ENCODE measurements at regions of chr10 and their contacts with region 1.

Region 1: DNA sequence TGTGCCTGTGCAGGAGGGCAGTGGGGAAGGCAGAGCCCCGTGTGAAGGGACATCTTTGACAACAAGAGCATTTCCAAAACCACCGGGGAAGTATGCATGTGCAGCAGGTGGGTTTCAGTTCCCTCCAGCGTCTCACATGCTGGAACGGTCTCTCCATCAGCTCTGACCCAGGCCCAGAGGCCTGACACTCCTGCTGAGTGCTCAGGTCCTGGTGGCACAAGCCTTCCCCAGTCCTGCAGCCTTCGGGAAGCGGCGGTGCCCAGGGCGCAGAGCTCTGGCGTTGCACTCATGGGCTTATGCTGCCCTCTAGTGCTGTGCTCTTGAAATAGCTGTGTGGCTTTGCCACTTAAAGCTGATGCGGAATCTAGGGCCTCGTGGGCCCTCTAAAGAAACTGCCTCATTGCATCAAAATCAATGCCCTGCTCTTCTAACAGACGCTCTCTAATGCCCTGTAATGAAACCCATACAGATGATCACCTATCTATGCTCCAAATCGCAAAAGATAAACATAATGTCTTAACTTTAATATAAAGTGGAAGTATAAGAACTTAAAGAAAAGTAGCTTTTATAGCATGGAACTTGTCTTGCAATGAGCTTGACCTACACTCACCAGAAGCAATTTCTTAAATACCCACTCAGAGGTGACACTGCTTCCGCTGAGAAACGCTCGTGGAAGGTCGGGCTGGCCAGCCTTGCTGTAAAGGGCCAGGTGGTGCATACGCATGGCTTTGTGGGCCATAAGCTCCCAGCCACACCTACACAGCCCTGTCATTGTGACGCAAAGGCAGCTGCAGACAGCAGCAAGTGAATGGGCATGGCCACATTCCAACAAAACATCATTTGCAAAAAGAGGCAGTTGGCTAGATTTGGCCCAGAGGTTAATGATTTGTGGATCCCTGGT is 38.6 kb downstream of the CLRN3 start:
- DNase-seq: peak; percentile 51 to 85
- H3K4me3 ChIP-seq: no peak overlapping the region
- H3K27ac ChIP-seq: no peak overlapping the region
- H3K4me1 ChIP-seq: peaks cover 0 to 5% (median 2%) of the 10 kb centered on the region in 4 experiments; a peak in 4 of 7 replicates
- H3K27me3 ChIP-seq: no peaks in the 10 kb centered on the region
- CTCF ChIP-seq: peak; percentile 77 to 93 (median 88)
- EP300 ChIP-seq: no peak
- POLR2A ChIP-seq: no peak
- RAD21 ChIP-seq: peak; percentile 99

Region 2: GRCh38 chr10:127649642-127650041 is 204.5 kb before region 1 on chr10:
- CTCF ChIA-PET with region 1: interaction called, 22 read pairs
- POLR2A ChIA-PET with region 1: no interaction called
- DNase-seq: peak; percentile 21 to 74
- H3K4me3 ChIP-seq: no peak overlapping the region
- H3K27ac ChIP-seq: no peak overlapping the region
- H3K4me1 ChIP-seq: no peaks in the 10 kb centered on the region
- H3K27me3 ChIP-seq: no peaks in the 10 kb centered on the region
- CTCF ChIP-seq: peak; percentile 47 to 74 (median 72)
- EP300 ChIP-seq: no peak
- POLR2A ChIP-seq: no peak
- RAD21 ChIP-seq: peak; percentile 68 to 79

Region 3: GRCh38 chr10:127694580-127695193 is 159.4 kb before region 1 on chr10:
- CTCF ChIA-PET with region 1: interaction called, 22 read pairs
- POLR2A ChIA-PET with region 1: no interaction called
- DNase-seq: peak; percentile 60 to 94
- H3K4me3 ChIP-seq: no peak overlapping the region
- H3K27ac ChIP-seq: no peak overlapping the region
- H3K4me1 ChIP-seq: peaks cover 0 to 2% (median 0%) of the 10 kb centered on the region in 4 experiments; a peak in 2 of 7 replicates
- H3K27me3 ChIP-seq: no peaks in the 10 kb centered on the region
- CTCF ChIP-seq: peak; percentile 84 to 98 (median 91)
- EP300 ChIP-seq: peak in 1 of 2 experiments; percentile 43; a peak in 1 of 3 replicates
- POLR2A ChIP-seq: no peak
- RAD21 ChIP-seq: peak; percentile 56 to 67

Region 4: GRCh38 chr10:127755753-127756152 is 98.4 kb before region 1 on chr10:
- CTCF ChIA-PET with region 1: interaction called, 26 read pairs
- POLR2A ChIA-PET with region 1: no interaction called
- DNase-seq: no peak
- H3K4me3 ChIP-seq: no peak overlapping the region
- H3K27ac ChIP-seq: no peak overlapping the region
- H3K4me1 ChIP-seq: no peaks in the 10 kb centered on the region
- H3K27me3 ChIP-seq: no peaks in the 10 kb centered on the region
- CTCF ChIP-seq: no peak
- EP300 ChIP-seq: no peak
- POLR2A ChIP-seq: no peak
- RAD21 ChIP-seq: peak in 1 of 2 experiments; percentile 9; a peak in 1 of 4 replicates

Region 5: GRCh38 chr10:127836966-127837365 is 17.2 kb before region 1 on chr10:
- CTCF ChIA-PET with region 1: interaction called, 20 read pairs
- POLR2A ChIA-PET with region 1: interaction called, 3 read pairs
- DNase-seq: no peak
- H3K4me3 ChIP-seq: no peak overlapping the region
- H3K27ac ChIP-seq: no peak overlapping the region
- H3K4me1 ChIP-seq: peaks cover 0 to 4% (median 1%) of the 10 kb centered on the region in 4 experiments; a peak in 1 of 7 replicates
- H3K27me3 ChIP-seq: no peaks in the 10 kb centered on the region
- CTCF ChIP-seq: no peak
- EP300 ChIP-seq: no peak
- POLR2A ChIP-seq: no peak
- RAD21 ChIP-seq: no peak

Region 6: DNA sequence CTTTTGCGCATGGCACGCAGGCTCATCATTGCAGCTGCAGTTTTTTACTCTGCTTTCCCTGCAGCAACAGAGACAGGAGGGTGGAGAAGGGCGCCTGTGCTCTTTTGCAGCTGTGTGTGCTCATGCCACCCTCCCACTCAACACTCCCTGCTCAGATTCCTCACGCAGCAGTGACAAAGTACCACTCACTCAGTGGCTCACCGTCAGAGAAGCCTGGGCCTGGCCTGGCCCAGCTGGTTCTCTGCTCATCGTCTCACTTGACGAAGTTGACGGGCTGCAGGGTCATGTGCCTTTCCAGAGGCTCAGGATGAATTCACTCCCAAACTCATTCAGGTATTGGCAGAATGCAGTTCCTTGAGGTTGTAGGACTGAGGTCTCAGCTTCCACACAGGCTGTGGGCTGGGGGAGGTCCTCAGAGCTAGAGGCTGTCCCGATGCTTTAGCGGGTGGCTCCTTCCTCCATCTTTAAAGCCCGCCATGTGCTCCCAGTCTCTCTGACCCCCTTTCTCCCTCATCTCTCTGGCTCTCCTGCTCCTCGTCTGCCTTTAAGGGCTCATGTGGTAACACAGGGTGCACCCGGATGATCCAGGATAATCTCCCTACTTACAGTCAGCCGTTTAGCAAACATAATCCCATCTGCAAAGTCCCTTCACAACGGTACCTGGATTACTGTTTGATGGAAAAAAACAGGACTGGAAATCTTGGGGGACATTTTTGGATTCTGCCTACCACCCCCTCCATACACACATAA is 78.6 kb after region 1 on chr10:
- CTCF ChIA-PET with region 1: no interaction called
- POLR2A ChIA-PET with region 1: no interaction called
- DNase-seq: no peak
- H3K4me3 ChIP-seq: no peak overlapping the region
- H3K27ac ChIP-seq: no peak overlapping the region
- H3K4me1 ChIP-seq: 0 out of 7 replicates have a peak, but pooled peaks cover 0 to 3% (median 0%) of the 10 kb centered on the region in 4 experiments
- H3K27me3 ChIP-seq: no peaks in the 10 kb centered on the region
- CTCF ChIP-seq: no peak
- EP300 ChIP-seq: no peak
- POLR2A ChIP-seq: no peak
- RAD21 ChIP-seq: no peak

Measured in H1 (cell line).